ENCODE measurements at regions of chr12 and their contacts with region 1.

Region 1: GRCh38 chr12:19915392-19916195 is 452.7 kb upstream of the PDE3A start:
- DNase-seq: peak in 1 of 4 donors; percentile 36
- ATAC-seq: peak; percentile 79
- H3K4me3 ChIP-seq: no peak overlapping the region
- H3K27ac ChIP-seq: no peak overlapping the region
- H3K4me1 ChIP-seq: no peaks in the 10 kb centered on the region
- H3K27me3 ChIP-seq: no peaks in the 10 kb centered on the region
- CTCF ChIP-seq: peak; percentile 40 to 67

Region 2: GRCh38 chr12:19712041-19712440 is 203.6 kb before region 1 on chr12:
- intact Hi-C with region 1: no loop called
- DNase-seq: no peak
- ATAC-seq: no peak
- H3K4me3 ChIP-seq: no peak overlapping the region
- H3K27ac ChIP-seq: no peak overlapping the region
- H3K4me1 ChIP-seq: no peaks in the 10 kb centered on the region
- H3K27me3 ChIP-seq: no peaks in the 10 kb centered on the region
- CTCF ChIP-seq: no peak

Region 3: DNA sequence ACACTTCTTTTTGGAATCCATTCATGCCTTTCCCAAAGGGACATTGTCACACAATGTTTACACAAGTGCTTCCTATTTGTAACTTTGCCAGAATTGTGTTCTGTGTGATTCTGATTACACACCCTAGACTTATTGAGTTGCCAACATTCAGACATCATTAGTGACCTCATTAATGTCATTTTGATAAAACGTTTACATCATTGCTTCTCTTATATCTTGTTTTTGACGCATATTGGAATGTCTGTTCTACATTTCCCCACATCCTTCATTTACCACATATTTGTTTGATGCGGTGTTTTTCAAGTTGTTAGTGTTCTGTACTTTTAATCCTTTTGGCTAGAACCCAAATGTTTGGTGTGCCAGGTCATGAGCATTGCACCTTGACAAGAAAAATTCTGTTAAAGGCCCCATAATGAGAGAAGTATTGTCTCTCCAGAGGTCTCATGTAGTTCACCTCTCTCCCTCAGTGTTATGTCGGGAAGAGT is 170.8 kb before region 1 on chr12:
- intact Hi-C with region 1: loop called in 1 of 2 experiments (anchors 10 kb)
- DNase-seq: peak in 2 of 4 donors; percentile 58 to 59
- ATAC-seq: peak; percentile 32
- H3K4me3 ChIP-seq: no peak overlapping the region
- H3K27ac ChIP-seq: peak overlapping the region in 1 of 2 donors; percentile 21
- H3K4me1 ChIP-seq: no peaks in the 10 kb centered on the region
- H3K27me3 ChIP-seq: no peaks in the 10 kb centered on the region
- CTCF ChIP-seq: no peak

Region 4: DNA sequence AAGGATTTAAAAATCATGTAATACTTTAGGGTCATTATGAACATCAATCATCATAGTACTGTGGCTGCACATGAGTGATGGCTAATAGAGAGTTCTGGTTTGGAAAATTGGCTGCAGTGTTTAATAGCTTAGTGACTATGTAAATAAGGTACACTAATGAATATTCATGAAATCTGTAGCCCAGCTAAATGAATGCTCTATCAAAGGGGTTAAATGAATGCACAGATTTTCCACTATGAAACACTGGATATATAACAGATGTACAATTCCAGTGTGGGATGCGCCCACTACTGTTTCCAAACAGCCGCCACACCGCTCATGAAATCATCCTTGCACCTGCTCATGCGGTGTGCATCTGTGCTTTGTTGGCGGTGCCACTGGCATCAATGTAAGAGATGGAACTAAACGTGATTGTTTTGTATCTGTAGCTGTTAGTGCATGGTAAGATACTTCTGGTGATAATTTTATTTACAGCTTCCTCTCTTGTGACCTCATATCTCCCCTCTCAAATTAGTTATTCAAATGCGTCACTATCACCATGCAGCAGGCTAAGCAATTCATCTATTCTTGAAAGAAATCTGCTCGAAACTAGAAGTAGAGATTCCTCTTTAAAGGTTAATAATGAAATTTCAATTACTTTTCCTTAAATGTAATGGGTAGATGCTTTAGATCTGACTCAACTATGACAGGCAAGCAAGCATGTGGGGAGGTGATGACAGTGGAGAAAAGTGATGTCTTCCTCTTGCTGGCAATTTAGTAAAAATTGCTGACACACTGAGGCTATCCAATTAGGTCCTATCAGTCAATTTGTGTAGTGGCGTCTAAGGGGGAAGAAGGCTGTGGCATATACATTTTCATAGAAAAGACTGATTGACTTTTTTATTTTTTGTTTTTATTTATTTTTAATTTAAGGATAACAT is 42.7 kb before region 1 on chr12:
- intact Hi-C with region 1: no loop called
- DNase-seq: no peak
- ATAC-seq: no peak
- H3K4me3 ChIP-seq: no peak overlapping the region
- H3K27ac ChIP-seq: no peak overlapping the region
- H3K4me1 ChIP-seq: no peaks in the 10 kb centered on the region
- H3K27me3 ChIP-seq: no peaks in the 10 kb centered on the region
- CTCF ChIP-seq: no peak

Measured in left lung (tissue), 14 donors.